ENCODE measurements at regions of chr5 and their contacts with region 1.

Region 1: GRCh38 chr5:121949867-121950266 is 11.9 kb upstream of the SRFBP1 start:
- DNase-seq: peak; percentile 46
- H3K4me3 ChIP-seq: no peak overlapping the region
- H3K27ac ChIP-seq: no peak overlapping the region
- H3K4me1 ChIP-seq: no peaks in the 10 kb centered on the region
- H3K27me3 ChIP-seq: no peaks in the 10 kb centered on the region
- CTCF ChIP-seq: peak; percentile 36 to 38
- POLR2A ChIP-seq: no peak

Region 2: GRCh38 chr5:120473332-120473731 is 1476.5 kb before region 1 on chr5:
- CTCF ChIA-PET with region 1: interaction called, 11 read pairs
- POLR2A ChIA-PET with region 1: no interaction called
- dilution Hi-C with region 1: no loop called
- intact Hi-C with region 1: loop called (anchors 5 kb)
- DNase-seq: no peak
- H3K4me3 ChIP-seq: no peak overlapping the region
- H3K27ac ChIP-seq: no peak overlapping the region
- H3K4me1 ChIP-seq: no peaks in the 10 kb centered on the region
- H3K27me3 ChIP-seq: peaks cover 1 to 6% of the 10 kb centered on the region in 2 experiments
- CTCF ChIP-seq: no peak
- POLR2A ChIP-seq: no peak

Region 3: GRCh38 chr5:120803282-120803681 is 1146.6 kb before region 1 on chr5:
- CTCF ChIA-PET with region 1: interaction called, 10 read pairs
- POLR2A ChIA-PET with region 1: no interaction called
- dilution Hi-C with region 1: no loop called
- intact Hi-C with region 1: no loop called
- DNase-seq: peak; percentile 15
- H3K4me3 ChIP-seq: no peak overlapping the region
- H3K27ac ChIP-seq: no peak overlapping the region
- H3K4me1 ChIP-seq: no peaks in the 10 kb centered on the region
- H3K27me3 ChIP-seq: no peaks in the 10 kb centered on the region
- CTCF ChIP-seq: no peak
- POLR2A ChIP-seq: no peak

Region 4: DNA sequence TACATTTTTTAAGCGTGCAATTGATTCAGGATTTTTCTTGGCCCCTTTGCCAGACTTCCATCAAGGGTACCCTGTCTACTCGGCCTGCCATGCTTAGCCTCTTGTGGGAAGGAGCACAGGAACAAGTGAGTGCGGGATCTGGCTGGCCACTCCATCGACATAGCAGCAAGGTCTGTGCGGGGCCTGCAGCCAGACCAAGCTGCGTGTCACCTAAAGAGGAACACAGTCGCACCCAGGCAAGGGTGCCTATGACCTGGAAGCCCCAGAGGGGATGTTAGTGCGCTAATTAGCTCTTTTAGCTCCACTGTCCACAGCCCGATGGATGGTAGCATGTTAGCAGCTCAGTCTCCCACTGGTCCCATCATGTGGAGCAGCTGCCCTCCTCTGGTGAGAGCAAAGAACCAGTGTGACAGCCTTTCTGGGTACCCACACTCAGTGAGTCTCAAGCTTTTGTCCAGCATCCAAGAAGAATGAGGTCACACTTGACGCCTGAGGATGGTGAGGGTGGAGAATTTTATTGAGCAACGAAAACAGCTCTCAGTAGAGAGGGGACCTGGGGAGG is 59.5 kb before region 1 on chr5:
- CTCF ChIA-PET with region 1: no interaction called
- POLR2A ChIA-PET with region 1: no interaction called
- dilution Hi-C with region 1: no loop called
- intact Hi-C with region 1: no loop called
- DNase-seq: no peak
- H3K4me3 ChIP-seq: no peak overlapping the region
- H3K27ac ChIP-seq: no peak overlapping the region
- H3K4me1 ChIP-seq: no peaks in the 10 kb centered on the region
- H3K27me3 ChIP-seq: no peaks in the 10 kb centered on the region
- CTCF ChIP-seq: no peak
- POLR2A ChIP-seq: no peak

Region 5: DNA sequence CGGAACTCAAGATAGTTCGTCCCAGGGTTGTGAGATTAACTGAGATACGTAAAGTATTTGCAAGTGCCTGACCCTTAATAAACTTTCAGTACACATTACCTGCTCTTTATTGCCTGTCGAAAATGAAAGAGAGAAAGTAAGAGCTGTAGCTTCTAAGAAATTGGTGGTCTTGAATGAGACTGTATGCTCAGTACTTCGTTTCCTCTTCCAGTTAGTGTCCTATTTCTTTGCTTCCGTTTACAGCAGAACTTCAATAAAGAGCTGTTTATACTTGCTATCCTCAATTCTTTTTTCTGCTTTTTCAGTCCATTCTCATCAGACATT is 12.4 kb after region 1 on chr5:
- CTCF ChIA-PET with region 1: interaction called, 43 read pairs
- POLR2A ChIA-PET with region 1: interaction called, 8 read pairs
- dilution Hi-C with region 1: no loop called
- intact Hi-C with region 1: no loop called
- DNase-seq: peak; percentile 42
- H3K4me3 ChIP-seq: peak overlapping the region; percentile 79 to 95 (median 88)
- H3K27ac ChIP-seq: peak overlapping the region; percentile 86
- H3K4me1 ChIP-seq: peaks cover 14% of the 10 kb centered on the region
- H3K27me3 ChIP-seq: peaks cover 4 to 5% of the 10 kb centered on the region in 2 experiments
- CTCF ChIP-seq: no peak
- POLR2A ChIP-seq: no peak

Measured in endothelial cell of umbilical vein (primary cell).